A673 (cell line): ENCODE measurements at regions of chr2 and their contacts with region 1.

Region 1: GRCh38 chr2:129780316-129781270 is 198.9 kb upstream of the RAB6C start:
- DNase-seq: peak; percentile 63
- H3K4me3 ChIP-seq: peak overlapping the region; percentile 7
- H3K27ac ChIP-seq: peak overlapping the region; percentile 37
- H3K4me1 ChIP-seq: peaks cover 28% of the 10 kb centered on the region
- H3K27me3 ChIP-seq: peaks cover 5% of the 10 kb centered on the region
- CTCF ChIP-seq: no peak

Region 2: DNA sequence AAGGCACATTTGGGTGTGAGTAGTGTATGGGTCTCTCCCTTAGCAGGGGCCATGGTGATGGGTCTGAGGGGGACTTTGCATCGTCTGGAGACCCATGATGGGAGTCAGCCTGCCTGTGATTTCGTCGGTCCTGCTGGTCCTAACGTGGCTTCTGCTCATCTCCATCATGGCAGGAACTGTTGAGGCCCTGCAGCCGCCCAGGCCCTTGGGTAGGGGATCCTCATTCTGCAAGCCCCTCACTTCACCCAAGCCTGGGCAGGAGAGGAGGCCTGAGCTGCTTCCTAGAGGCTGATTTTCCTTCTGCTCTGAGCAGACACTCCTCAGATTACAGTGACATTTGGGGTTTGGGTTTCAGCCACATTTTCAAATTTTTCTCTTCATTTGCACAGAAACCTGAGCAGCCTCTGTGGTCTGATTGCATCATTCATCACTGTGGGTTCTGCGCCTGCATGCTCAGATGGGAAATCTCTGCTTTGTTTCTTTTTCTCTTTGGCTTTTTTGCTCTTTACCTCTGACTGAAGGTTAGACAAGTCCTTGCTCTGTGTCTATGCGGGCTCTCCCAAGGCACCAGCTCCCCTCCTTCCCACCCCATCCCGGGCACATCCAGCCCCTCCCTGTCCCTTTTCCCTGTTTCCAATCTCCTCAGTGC is 1156.7 kb before region 1 on chr2:
- CTCF ChIA-PET with region 1: no interaction called
- POLR2A ChIA-PET with region 1: no interaction called
- intact Hi-C with region 1: no loop called
- DNase-seq: peak; percentile 38
- H3K4me3 ChIP-seq: no peak overlapping the region
- H3K27ac ChIP-seq: peak overlapping the region; percentile 65
- H3K4me1 ChIP-seq: peaks cover 16% of the 10 kb centered on the region
- H3K27me3 ChIP-seq: no peaks in the 10 kb centered on the region
- CTCF ChIP-seq: no peak

Region 3: GRCh38 chr2:129422028-129422427 is 358.6 kb before region 1 on chr2:
- CTCF ChIA-PET with region 1: no interaction called
- POLR2A ChIA-PET with region 1: interaction called, 10 read pairs
- intact Hi-C with region 1: no loop called
- DNase-seq: no peak
- H3K4me3 ChIP-seq: no peak overlapping the region
- H3K27ac ChIP-seq: no peak overlapping the region
- H3K4me1 ChIP-seq: no peaks in the 10 kb centered on the region
- H3K27me3 ChIP-seq: peaks cover 26% of the 10 kb centered on the region
- CTCF ChIP-seq: no peak